PC-9 (cell line): ENCODE measurements at regions of chr5 and their contacts with region 1.

Region 1: GRCh38 chr5:122004201-122004600 is 42.4 kb downstream of the SRFBP1 start:
- DNase-seq: no peak
- H3K4me3 ChIP-seq: no peak overlapping the region
- H3K27ac ChIP-seq: no peak overlapping the region
- H3K4me1 ChIP-seq: no peaks in the 10 kb centered on the region
- H3K27me3 ChIP-seq: no peaks in the 10 kb centered on the region
- CTCF ChIP-seq: no peak

Region 2: DNA sequence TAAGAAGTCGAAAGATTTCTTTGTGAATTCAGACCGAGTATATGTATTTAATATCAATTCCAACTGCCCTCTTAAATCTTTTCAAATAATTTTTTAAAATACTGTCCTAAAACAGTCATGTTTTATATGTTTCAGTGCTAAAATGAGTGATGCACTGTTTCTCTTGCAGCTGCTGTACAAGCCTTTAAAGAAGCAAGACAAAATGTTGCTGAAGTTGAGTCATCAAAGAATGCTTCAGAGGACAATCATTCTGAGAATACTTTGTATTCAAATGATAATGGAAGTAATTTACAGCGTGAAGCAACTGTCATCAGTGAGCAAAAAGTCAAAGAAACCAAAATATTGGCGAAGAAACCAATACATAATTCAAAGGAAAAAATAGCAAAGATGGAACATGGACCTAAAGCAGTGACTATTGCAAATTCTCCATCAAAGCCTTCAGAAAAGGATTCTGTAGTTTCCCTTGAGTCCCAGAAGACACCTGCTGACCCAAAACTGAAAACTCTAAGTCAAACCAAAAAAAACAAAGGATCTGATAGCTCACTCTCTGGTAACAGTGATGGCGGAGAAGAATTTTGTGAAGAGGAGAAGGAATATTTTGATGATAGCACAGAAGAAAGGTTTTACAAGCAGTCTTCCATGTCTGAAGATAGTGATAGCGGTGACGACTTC is 15.9 kb after region 1 on chr5:
- CTCF ChIA-PET with region 1: no interaction called
- POLR2A ChIA-PET with region 1: no interaction called
- intact Hi-C with region 1: no loop called
- DNase-seq: no peak
- H3K4me3 ChIP-seq: no peak overlapping the region
- H3K27ac ChIP-seq: no peak overlapping the region
- H3K4me1 ChIP-seq: no peaks in the 10 kb centered on the region
- H3K27me3 ChIP-seq: no peaks in the 10 kb centered on the region
- CTCF ChIP-seq: no peak

Region 3: DNA sequence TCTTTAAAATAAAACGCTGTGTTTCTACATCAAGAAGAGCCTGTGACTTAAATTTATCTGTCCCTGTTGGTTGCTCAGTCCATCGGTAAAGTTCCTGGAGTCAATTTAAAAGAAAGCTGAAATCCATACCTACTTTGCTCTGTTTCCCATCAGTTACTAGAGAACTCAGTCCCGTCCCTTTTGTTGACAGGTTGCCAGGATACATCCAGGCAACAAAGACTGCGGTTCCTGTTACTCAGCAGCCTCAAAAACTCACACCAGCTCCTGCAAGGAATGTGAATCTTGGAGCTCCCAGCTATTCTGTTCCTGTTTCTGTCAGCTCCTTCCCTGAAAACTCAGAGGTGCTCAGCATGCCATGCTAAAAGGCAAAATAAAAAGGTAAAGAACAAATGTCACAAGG is 125.1 kb after region 1 on chr5 and contains the start of gene ZNF474:
- CTCF ChIA-PET with region 1: interaction called, 11 read pairs
- POLR2A ChIA-PET with region 1: no interaction called
- intact Hi-C with region 1: no loop called
- DNase-seq: peak; percentile 75 to 86
- H3K4me3 ChIP-seq: no peak within 1 kb of the TSS
- H3K27ac ChIP-seq: no peak within 1 kb of the TSS
- H3K4me1 ChIP-seq: 0 out of 2 replicates have a peak, but pooled peaks cover 4% of the 10 kb centered on the region
- H3K27me3 ChIP-seq: no peaks in the 10 kb centered on the region
- CTCF ChIP-seq: no peak
- total RNA-seq, gene ZNF474: not detected in 2 replicates